ENCODE measurements at regions of chr16 and their contacts with region 1.

Region 1: GRCh38 chr16:83338138-83338537 is 469.6 kb upstream of the HSBP1 start:
- DNase-seq: no peak
- ATAC-seq: no peak
- H3K4me3 ChIP-seq: no peak overlapping the region
- H3K27ac ChIP-seq: no peak overlapping the region
- H3K4me1 ChIP-seq: no peaks in the 10 kb centered on the region
- H3K27me3 ChIP-seq: 0 out of 2 replicates have a peak, but pooled peaks cover 3% of the 10 kb centered on the region
- CTCF ChIP-seq: no peak

Region 2: GRCh38 chr16:84438983-84439696 is 1101.0 kb after region 1 on chr16:
- CTCF ChIA-PET with region 1: interaction called, 11 read pairs
- POLR2A ChIA-PET with region 1: no interaction called
- intact Hi-C with region 1: no loop called
- DNase-seq: no peak
- ATAC-seq: no peak
- H3K4me3 ChIP-seq: no peak overlapping the region
- H3K27ac ChIP-seq: no peak overlapping the region
- H3K4me1 ChIP-seq: no peaks in the 10 kb centered on the region
- H3K27me3 ChIP-seq: no peaks in the 10 kb centered on the region
- CTCF ChIP-seq: no peak